ENCODE measurements at regions of chr11 and their contacts with region 1.

Region 1: DNA sequence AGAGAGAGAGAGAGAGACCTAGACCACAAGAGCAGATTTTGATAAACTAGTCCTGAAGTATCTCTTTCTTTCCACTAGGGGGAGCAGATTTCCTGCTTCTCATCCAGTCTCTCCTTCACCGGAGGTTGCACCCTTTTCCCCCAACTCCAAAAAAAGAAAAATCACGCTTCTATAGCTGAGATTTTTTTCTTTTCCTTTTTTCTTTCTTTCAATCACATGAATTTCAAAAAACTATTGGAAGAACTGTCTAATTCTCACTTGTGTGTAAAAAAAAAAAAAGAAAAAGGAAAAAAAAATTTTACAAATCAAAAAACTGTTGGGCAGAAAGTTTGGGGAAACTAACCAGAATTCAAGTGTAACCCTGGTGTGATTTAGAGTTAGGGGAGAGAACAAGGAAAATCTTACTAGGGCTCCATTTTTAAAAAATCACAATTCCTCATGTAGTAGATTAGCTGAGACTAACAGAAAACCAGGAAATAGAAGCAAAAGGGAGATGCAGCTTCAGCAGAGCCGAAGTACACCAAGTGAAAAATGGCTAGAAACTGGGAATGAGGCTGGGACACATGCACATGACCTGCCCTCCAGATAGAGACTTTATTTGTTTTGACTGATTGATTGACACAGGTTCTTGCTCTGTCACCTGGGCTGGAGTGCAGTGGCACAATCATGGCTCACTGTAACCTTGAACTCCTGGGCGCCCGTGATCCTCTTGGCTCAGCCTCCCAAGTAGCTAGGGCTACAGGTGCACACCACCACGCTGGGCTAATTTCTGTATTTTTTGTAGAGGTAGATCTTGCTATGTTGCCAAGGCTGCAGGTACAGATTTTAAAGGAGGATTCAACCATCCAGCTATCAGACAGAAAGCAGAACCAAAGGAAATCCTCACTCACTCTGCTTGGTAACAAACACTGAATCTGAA is 27.1 kb downstream of the SDHD start:
- DNase-seq: no peak
- H3K4me3 ChIP-seq: no peak overlapping the region
- H3K27ac ChIP-seq: no peak overlapping the region
- H3K4me1 ChIP-seq: peaks cover 0 to 7% (median 0%) of the 10 kb centered on the region in 3 donors
- H3K27me3 ChIP-seq: no peaks in the 10 kb centered on the region
- CTCF ChIP-seq: peak; percentile 51 to 73 (median 63)
- POLR2A ChIP-seq: no peak

Region 2: GRCh38 chr11:111860257-111860656 is 253.5 kb before region 1 on chr11:
- intact Hi-C with region 1: no loop called
- DNase-seq: no peak
- H3K4me3 ChIP-seq: no peak overlapping the region
- H3K27ac ChIP-seq: no peak overlapping the region
- H3K4me1 ChIP-seq: no peaks in the 10 kb centered on the region
- H3K27me3 ChIP-seq: no peaks in the 10 kb centered on the region
- CTCF ChIP-seq: no peak
- POLR2A ChIP-seq: no peak

Region 3: GRCh38 chr11:111982019-111982464 is 131.8 kb before region 1 on chr11:
- intact Hi-C with region 1: no loop called
- DNase-seq: no peak
- H3K4me3 ChIP-seq: no peak overlapping the region
- H3K27ac ChIP-seq: peak overlapping the region in 3 of 4 donors; percentile 60 to 79 (median 74)
- H3K4me1 ChIP-seq: peaks cover 10 to 59% (median 15%) of the 10 kb centered on the region in 3 donors
- H3K27me3 ChIP-seq: no peaks in the 10 kb centered on the region
- CTCF ChIP-seq: peak; percentile 14 to 86 (median 78)
- POLR2A ChIP-seq: no peak

Region 4: DNA sequence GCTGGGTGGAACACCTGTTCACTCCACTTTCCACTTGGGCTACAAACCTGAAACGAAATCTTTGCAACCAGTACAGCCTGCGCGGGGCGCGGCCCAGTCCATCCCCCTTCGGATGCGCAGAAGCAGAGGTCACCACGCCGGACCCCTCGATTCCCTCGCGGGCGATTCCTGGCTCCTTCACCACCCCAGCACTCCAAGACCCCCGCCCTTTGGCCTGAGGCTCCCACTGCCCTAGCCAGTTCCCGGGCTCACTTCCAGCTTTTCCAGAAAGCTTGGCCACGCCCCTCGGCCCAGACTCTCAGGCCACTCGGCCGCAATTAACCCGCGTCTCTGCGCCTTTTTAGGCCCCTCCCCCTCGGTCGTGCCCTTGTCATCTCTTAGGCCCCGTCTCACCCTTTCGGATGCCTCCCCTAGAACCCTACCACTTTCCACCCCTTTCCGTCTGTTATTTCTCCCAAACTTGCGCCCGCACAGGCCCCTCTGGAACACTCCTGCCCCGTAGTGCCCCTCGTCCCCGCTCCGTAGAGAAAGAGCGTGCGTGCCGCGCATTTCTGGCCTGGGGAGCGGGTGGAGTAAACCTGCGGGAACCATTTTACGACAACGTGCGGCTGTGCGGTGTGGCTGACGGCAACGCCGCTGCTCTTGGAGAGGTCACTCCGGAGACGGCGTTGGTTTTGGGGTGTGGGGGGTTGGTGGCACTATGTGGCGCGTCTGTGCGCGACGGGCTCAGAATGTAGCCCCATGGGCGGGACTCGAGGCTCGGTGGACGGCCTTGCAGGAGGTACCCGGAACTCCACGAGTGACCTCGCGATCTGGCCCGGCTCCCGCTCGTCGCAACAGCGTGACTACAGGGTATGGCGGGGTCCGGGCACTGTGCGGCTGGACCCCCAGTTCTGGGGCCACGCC is 88.8 kb before region 1 on chr11 and contains the start of gene DLAT:
- intact Hi-C with region 1: no loop called
- DNase-seq: peak; percentile 38
- H3K4me3 ChIP-seq: peak within 1 kb of the TSS; percentile 66 to 93 (median 80)
- H3K27ac ChIP-seq: peak within 1 kb of the TSS; percentile 94 to 96 (median 95)
- H3K4me1 ChIP-seq: peaks cover 0 to 26% (median 14%) of the 10 kb centered on the region in 3 donors
- H3K27me3 ChIP-seq: no peaks in the 10 kb centered on the region
- CTCF ChIP-seq: no peak
- POLR2A ChIP-seq: peak in 2 of 4 donors; percentile 60 to 69
- total RNA-seq, gene DLAT: 28.9 to 56.5 (median 39.4) TPM

Region 5: DNA sequence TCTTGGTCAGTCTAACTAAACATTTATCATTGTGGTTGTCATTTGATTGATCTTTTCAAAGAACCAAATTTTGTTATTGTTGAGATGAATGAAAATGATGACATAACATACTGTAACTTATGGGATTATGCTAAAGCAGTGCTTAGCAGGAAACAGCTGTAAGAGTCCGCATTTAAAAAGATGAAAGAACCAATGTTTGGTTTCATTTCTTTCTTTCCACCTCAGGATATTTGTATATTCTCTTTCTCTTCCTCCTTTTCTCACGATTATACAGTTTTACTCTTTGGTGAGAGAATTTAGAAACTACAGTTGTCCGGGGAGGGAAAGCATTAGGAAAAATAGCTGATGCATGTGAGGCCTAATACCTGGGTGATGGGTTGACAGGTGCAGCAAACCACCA is 63.1 kb before region 1 on chr11:
- intact Hi-C with region 1: no loop called
- DNase-seq: no peak
- H3K4me3 ChIP-seq: no peak overlapping the region
- H3K27ac ChIP-seq: no peak overlapping the region
- H3K4me1 ChIP-seq: peaks cover 0 to 17% (median 0%) of the 10 kb centered on the region in 3 donors
- H3K27me3 ChIP-seq: no peaks in the 10 kb centered on the region
- CTCF ChIP-seq: no peak
- POLR2A ChIP-seq: no peak

Region 6: DNA sequence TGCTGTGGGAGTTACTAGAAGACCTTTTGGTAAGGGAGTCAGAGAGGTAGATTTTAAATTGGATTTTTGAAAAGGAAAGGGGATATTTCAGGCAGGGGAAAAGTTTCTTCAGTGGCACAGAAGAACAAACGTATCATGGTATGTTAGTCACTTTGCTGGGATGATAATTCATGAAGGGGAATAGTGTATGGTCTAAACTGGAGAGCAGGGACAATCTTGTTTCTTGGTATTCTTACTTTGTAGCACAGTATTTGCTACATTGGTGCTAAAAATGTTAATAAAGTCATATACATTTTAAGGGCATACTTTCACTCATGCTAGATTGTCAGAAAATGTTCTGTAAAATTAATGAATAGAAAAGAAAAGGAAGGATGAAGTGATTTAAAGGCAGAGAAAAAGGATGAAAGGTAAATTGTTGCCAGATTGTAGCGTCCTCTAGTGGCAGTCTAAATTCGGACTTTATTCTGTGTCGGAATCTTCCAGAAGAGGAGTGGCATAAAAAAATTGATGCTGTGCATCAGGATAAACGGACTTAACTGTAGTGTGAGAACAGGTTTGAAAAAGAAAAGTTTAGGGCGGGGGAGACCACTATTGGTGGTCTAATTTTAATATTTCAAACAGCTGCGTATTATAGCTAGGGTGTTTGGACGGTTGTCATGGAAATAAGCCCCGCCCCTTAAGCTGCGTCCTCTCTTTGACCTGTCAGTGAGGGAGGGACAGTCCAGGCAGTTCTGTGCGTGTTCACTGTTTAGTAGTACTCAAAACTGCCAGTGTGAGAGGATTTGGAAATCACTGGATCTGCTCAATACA is 61.2 kb after region 1 on chr11 and contains the start of gene BCO2:
- intact Hi-C with region 1: loop called (anchors 10 kb)
- DNase-seq: no peak
- H3K4me3 ChIP-seq: peak within 1 kb of the TSS; percentile 7 to 54 (median 32)
- H3K27ac ChIP-seq: peak within 1 kb of the TSS; percentile 11 to 70 (median 64)
- H3K4me1 ChIP-seq: peaks cover 0 to 17% (median 3%) of the 10 kb centered on the region in 3 donors
- H3K27me3 ChIP-seq: no peaks in the 10 kb centered on the region
- CTCF ChIP-seq: peak; percentile 65 to 92 (median 80)
- POLR2A ChIP-seq: no peak
- total RNA-seq, gene BCO2: 2.7 to 17.0 (median 9.5) TPM

Measured in esophagus squamous epithelium (tissue), 5 donors.